ENCODE measurements at regions of chr12 and their contacts with region 1.

Region 1: GRCh38 chr12:19277707-19278106 is 148.2 kb downstream of the PLEKHA5 start:
- H3K4me3 ChIP-seq: no peak overlapping the region
- H3K27ac ChIP-seq: no peak overlapping the region
- H3K4me1 ChIP-seq: peaks cover 10% of the 10 kb centered on the region
- CTCF ChIP-seq: no peak

Region 2: GRCh38 chr12:19288603-19289244 is 11.0 kb after region 1 on chr12:
- CTCF ChIA-PET with region 1: interaction called, 22 read pairs
- POLR2A ChIA-PET with region 1: no interaction called
- H3K4me3 ChIP-seq: no peak overlapping the region
- H3K27ac ChIP-seq: no peak overlapping the region
- H3K4me1 ChIP-seq: no peaks in the 10 kb centered on the region
- CTCF ChIP-seq: no peak

Measured in HEK293 (cell line).